MCF 10A (cell line): ENCODE measurements at regions of chr19 and their contacts with region 1.

Region 1: DNA sequence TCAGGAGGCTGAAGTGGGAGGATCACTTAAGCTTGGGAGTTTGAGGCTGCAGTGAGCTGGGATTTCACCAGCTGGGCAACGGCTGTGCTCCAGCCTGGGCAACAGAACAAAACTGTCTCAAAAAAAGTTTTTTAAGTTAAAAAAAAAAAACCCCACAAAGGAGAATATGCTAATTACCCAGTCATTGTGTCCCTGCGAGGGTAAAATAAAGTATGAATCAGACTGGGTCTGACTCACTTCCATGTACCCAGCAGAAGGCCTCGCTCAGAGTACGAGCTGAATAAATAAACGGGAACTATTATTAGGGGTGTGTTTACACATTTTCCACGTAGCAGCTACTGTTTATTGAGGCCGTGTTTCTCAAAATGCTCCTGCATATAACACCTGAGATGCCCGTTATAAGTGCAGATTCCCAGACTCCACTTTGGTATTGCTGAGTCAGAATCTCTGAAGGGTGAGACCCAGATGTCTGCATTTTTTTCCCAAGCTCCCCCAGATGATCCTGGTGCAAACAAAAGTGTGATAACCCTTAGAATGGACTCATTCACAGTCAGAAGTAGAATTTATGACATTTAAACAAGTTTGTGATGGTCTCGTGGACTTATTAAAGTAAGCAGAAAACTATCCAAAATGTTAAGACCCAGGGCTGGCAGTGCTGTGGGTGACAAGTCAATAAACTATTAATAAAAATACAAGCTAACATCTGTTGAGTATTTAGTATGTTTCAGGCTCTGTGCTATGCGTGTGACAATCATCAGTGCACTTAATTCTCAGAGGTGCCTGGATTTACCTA is 28.2 kb downstream of the KCNC3 start:
- DNase-seq: peak; percentile 78
- H3K4me3 Mint-ChIP-seq: no peak overlapping the region
- H3K27ac Mint-ChIP-seq: no peak overlapping the region
- H3K4me1 Mint-ChIP-seq: no peaks in the 10 kb centered on the region
- H3K27me3 Mint-ChIP-seq: no peaks in the 10 kb centered on the region
- CTCF ChIP-seq: no peak

Region 2: DNA sequence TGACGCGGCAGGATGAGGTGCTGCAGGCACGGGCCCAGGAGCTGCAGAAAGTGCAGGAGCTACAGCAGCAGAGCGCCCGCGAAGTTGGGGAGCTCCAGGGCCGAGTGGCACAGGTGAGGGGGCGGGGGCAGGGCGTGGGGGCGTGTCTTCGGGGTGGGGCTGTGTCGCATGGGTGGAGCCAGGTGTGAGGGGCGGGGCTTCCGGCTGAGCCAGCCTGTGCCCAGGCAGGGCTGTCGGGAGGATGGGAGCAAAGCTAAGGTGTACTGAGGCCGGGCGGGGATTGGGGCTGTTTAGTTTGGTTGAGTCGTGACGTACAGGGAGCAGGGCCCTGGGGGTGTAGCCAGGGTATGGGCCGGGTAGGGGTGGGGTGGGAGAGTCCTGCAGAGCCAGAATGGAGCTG is 34.1 kb before region 1 on chr19:
- CTCF ChIA-PET with region 1: no interaction called
- POLR2A ChIA-PET with region 1: no interaction called
- intact Hi-C with region 1: no loop called
- DNase-seq: no peak
- H3K4me3 Mint-ChIP-seq: no peak overlapping the region
- H3K27ac Mint-ChIP-seq: no peak overlapping the region
- H3K4me1 Mint-ChIP-seq: no peaks in the 10 kb centered on the region
- H3K27me3 Mint-ChIP-seq: no peaks in the 10 kb centered on the region
- CTCF ChIP-seq: no peak

Region 3: DNA sequence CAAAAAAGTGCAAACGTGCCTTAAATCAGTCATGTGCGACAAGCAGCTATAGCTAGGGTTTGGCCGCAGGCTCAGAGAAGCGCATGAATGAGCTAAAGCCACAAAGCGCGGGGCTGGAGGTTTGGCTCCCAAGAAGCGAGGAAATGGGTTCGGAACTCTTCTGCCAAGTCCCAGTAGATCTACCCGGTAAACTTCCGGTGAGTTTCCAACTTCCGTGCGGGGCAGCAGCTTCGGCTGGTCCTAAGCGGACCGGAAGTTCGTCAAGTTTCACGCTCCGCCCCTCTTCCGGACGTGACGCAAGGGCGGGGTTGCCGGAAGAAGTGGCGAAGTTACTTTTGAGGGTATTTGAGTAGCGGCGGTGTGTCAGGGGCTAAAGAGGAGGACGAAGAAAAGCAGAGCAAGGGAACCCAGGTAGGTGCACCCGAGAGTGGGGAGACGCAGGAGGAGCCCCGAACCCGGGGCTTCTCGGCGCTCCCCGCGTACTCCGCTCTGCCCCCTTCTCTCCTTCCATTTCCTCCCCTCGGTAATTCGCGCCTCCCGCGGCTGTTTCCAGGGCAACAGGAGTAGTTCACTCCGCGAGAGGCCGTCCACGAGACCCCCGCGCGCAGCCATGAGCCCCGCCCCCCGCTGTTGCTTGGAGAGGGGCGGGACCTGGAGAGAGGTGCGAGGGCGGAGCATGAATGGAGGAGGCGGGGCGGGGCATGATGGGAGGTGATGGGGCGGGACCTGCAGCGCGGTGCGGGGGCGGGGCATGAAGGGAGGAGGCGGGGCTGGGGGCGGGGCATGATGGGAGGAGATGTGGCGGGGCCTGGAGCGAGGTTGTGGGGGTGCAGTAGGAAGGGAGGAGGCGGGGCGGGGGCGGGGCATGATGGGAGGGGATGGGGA is 75.4 kb after region 1 on chr19 and contains the start of gene NR1H2:
- CTCF ChIA-PET with region 1: no interaction called
- POLR2A ChIA-PET with region 1: no interaction called
- intact Hi-C with region 1: loop called (anchors 2 kb)
- DNase-seq: peak; percentile 97
- H3K4me3 Mint-ChIP-seq: peak within 1 kb of the TSS; percentile 100
- H3K27ac Mint-ChIP-seq: peak within 1 kb of the TSS; percentile 100
- H3K4me1 Mint-ChIP-seq: peaks cover 5% of the 10 kb centered on the region
- H3K27me3 Mint-ChIP-seq: no peaks in the 10 kb centered on the region
- CTCF ChIP-seq: no peak
- total RNA-seq, gene NR1H2: 62.0 and 65.7 TPM in 2 replicates